ENCODE measurements at regions of chr10 and their contacts with region 1.

Region 1: GRCh38 chr10:102064868-102065560 is at the start of gene HPS6:
- DNase-seq: peak; percentile 61 to 97 (median 83)

Region 2: GRCh38 chr10:101903827-101904550 is 161.0 kb before region 1 on chr10:
- intact Hi-C with region 1: no loop called
- DNase-seq: peak in 8 of 10 donors; percentile 36 to 93 (median 43)

Region 3: DNA sequence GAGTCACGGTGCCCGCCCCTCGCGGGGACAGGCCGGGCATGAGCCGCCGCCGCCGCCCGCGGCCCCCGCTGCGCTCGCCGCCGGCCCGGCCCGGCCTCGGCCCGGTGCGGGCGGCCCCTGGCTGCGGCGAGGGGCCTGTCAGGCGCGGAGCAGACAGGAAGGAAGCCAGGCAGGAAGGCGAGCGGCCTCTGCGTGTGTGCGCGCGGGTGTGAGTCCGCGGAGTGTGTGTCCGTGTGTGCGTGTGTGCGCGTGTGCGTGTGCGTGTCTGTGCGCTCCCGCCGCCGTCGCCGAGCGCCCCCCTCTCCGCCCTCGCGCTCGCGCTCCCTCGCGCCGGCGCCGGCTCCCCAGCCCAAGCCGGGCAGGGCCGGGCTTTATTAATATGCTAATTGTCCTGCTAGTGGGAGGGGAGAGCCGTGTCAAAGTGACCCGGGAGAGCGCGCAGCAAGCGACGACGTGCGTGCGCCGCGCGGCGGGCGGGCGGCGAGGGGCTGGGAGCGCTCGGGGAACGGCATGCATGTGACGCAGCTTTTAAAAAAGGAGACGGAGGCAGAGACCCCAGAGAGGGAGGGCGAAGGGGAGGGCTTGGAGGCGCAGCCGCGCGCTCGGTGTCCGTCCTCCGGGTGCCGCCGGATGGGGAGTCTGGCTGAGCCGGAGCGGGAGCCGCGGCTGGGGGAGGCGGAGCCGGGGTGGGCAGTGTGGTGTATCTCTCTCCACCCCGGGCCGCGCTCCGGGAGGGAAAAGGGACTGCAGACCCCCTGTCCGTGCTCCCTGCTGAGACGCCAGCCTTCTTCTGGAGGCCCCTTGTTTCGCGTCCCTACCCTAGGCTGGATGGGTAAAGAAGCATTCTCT is 55.4 kb after region 1 on chr10 and contains the start of gene LDB1:
- intact Hi-C with region 1: loop called (anchors 2 kb)
- DNase-seq: peak; percentile 67 to 98 (median 80)

Region 4: GRCh38 chr10:102894466-102895213 is 829.6 kb after region 1 on chr10:
- intact Hi-C with region 1: no loop called
- DNase-seq: no peak

Measured in posterior cingulate gyrus (tissue), 11 donors.